ENCODE measurements at regions of chr4 and their contacts with region 1.

Region 1: GRCh38 chr4:4488405-4489404 is 53.1 kb downstream of the STX18 start:
- DNase-seq: no peak
- H3K4me3 ChIP-seq: no peak overlapping the region
- H3K27ac ChIP-seq: no peak overlapping the region
- H3K4me1 ChIP-seq: peaks cover 8 to 46% (median 20%) of the 10 kb centered on the region in 6 donors
- H3K27me3 ChIP-seq: no peaks in the 10 kb centered on the region
- CTCF ChIP-seq: peak; percentile 75 to 85 (median 82)
- POLR2A ChIP-seq: no peak

Region 2: GRCh38 chr4:4762909-4763821 is 274.5 kb after region 1 on chr4:
- intact Hi-C with region 1: no loop called
- DNase-seq: no peak
- H3K4me3 ChIP-seq: peak overlapping the region in 1 of 8 donors; percentile 13
- H3K27ac ChIP-seq: peak overlapping the region in 2 of 8 donors; percentile 11 to 28
- H3K4me1 ChIP-seq: peaks cover 0 to 17% (median 7%) of the 10 kb centered on the region in 6 donors
- H3K27me3 ChIP-seq: peaks cover 0 to 9% (median 0%) of the 10 kb centered on the region in 7 donors
- CTCF ChIP-seq: no peak
- POLR2A ChIP-seq: no peak

Region 3: GRCh38 chr4:4869731-4870571 is 381.2 kb after region 1 on chr4:
- intact Hi-C with region 1: loop called (anchors 10 kb)
- DNase-seq: no peak
- H3K4me3 ChIP-seq: no peak overlapping the region
- H3K27ac ChIP-seq: no peak overlapping the region
- H3K4me1 ChIP-seq: peaks cover 3 to 70% (median 33%) of the 10 kb centered on the region in 6 donors
- H3K27me3 ChIP-seq: peaks cover 13 to 100% (median 100%) of the 10 kb centered on the region in 7 donors
- CTCF ChIP-seq: no peak
- POLR2A ChIP-seq: no peak

Region 4: GRCh38 chr4:5024673-5025072 is 536.0 kb after region 1 on chr4:
- intact Hi-C with region 1: no loop called
- DNase-seq: no peak
- H3K4me3 ChIP-seq: no peak overlapping the region
- H3K27ac ChIP-seq: no peak overlapping the region
- H3K4me1 ChIP-seq: peaks cover 0 to under 1% (median 0%) of the 10 kb centered on the region in 6 donors
- H3K27me3 ChIP-seq: peaks cover 0 to 26% (median 4%) of the 10 kb centered on the region in 7 donors
- CTCF ChIP-seq: no peak
- POLR2A ChIP-seq: no peak

Region 5: GRCh38 chr4:5812506-5813229 is 1324.0 kb after region 1 on chr4:
- intact Hi-C with region 1: loop called (anchors 10 kb)
- DNase-seq: peak; percentile 54
- H3K4me3 ChIP-seq: no peak overlapping the region
- H3K27ac ChIP-seq: no peak overlapping the region
- H3K4me1 ChIP-seq: no peaks in the 10 kb centered on the region
- H3K27me3 ChIP-seq: peaks cover 0 to 10% (median 0%) of the 10 kb centered on the region in 7 donors
- CTCF ChIP-seq: peak in 10 of 11 experiments; percentile 20 to 69 (median 55)
- POLR2A ChIP-seq: no peak

Measured in spleen (tissue), 13 donors.